ENCODE measurements at regions of chr6 and their contacts with region 1.

Region 1: GRCh38 chr6:32971581-32972352 is 3.4 kb downstream of the BRD2 start:
- DNase-seq: peak; percentile 99 to 100 (median 100)
- ATAC-seq: peak; percentile 57
- H3K4me3 ChIP-seq: peak overlapping the region; percentile 78 to 98
- H3K4me3 Mint-ChIP-seq: peak overlapping the region; percentile 93
- H3K27ac ChIP-seq: peak overlapping the region; percentile 86 to 97
- H3K27ac Mint-ChIP-seq: peak overlapping the region; percentile 99
- H3K4me1 ChIP-seq: peaks cover 33% of the 10 kb centered on the region
- H3K4me1 Mint-ChIP-seq: peaks cover 47% of the 10 kb centered on the region
- H3K27me3 ChIP-seq: no peaks in the 10 kb centered on the region
- H3K27me3 Mint-ChIP-seq: no peaks in the 10 kb centered on the region
- CTCF ChIP-seq: no peak

Region 2: GRCh38 chr6:32838114-32838958 is 133.4 kb before region 1 on chr6 and contains the start of gene TAP2:
- CTCF ChIA-PET with region 1: interaction called, 34 read pairs
- POLR2A ChIA-PET with region 1: interaction called, 47 read pairs
- intact Hi-C with region 1: no loop called
- DNase-seq: peak; percentile 96 to 99 (median 97)
- ATAC-seq: peak; percentile 90
- H3K4me3 ChIP-seq: peak within 1 kb of the TSS; percentile 64 to 83
- H3K4me3 Mint-ChIP-seq: peak within 1 kb of the TSS; percentile 93
- H3K27ac ChIP-seq: peak within 1 kb of the TSS; percentile 88 to 100
- H3K27ac Mint-ChIP-seq: peak within 1 kb of the TSS; percentile 98
- H3K4me1 ChIP-seq: peaks cover 60% of the 10 kb centered on the region
- H3K4me1 Mint-ChIP-seq: peaks cover 89% of the 10 kb centered on the region
- H3K27me3 ChIP-seq: no peaks in the 10 kb centered on the region
- H3K27me3 Mint-ChIP-seq: no peaks in the 10 kb centered on the region
- CTCF ChIP-seq: peak; percentile 99
- total RNA-seq, gene TAP2: 88.9 to 91.0 TPM

Region 3: DNA sequence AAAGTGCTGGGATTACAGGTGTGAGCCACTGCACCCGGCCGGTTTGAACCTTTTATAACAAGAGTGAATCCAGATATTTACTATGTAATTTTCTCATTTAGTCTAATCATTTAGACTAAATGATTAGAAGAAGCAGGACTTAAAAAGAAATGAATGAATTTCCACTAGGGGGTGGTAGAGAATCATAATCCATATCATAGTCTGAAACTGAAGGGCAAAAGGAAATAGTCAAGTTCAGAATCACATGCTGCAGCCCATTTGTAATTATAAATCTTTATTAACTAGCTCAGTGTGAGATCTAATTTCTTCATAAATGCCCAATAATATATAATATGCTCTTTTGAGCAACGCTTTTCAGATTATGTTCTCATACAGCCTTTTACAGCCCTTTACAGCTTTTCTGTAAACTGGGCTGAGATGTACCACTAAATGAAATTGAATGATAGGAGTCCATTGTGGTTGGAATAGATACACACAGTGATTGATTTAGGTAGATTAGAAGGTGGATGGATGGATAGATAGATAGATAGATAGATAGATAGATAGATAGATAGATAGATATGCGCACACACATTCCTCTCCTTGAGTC is 86.0 kb before region 1 on chr6:
- CTCF ChIA-PET with region 1: interaction called, 18 read pairs
- POLR2A ChIA-PET with region 1: interaction called, 11 read pairs
- intact Hi-C with region 1: loop called in 1 of 2 experiments (anchors 5 kb)
- DNase-seq: peak in 2 of 9 experiments; percentile 78 to 85
- ATAC-seq: peak; percentile 71
- H3K4me3 ChIP-seq: no peak overlapping the region
- H3K4me3 Mint-ChIP-seq: no peak overlapping the region
- H3K27ac ChIP-seq: no peak overlapping the region
- H3K27ac Mint-ChIP-seq: no peak overlapping the region
- H3K4me1 ChIP-seq: no peaks in the 10 kb centered on the region
- H3K4me1 Mint-ChIP-seq: no peaks in the 10 kb centered on the region
- H3K27me3 ChIP-seq: no peaks in the 10 kb centered on the region
- H3K27me3 Mint-ChIP-seq: no peaks in the 10 kb centered on the region
- CTCF ChIP-seq: peak; percentile 77

Region 4: DNA sequence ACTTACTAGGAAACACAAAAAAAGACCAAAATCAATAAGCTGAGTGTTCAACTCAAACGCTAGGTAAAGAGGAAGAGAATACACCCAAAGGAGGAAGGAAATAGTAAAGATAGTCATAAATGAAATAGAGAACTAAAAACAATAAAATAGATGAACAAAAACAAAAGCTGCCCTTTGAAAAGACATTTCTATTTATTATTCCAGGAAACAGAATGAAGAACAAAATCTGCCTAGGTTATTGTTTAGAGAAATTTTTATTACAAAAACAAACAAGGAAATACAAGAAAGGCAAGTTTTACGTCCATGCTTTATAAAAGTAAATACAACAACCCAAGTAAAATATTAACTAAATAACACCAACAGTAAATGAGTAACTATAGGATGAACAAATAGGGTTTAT is 51.1 kb before region 1 on chr6:
- CTCF ChIA-PET with region 1: no interaction called
- POLR2A ChIA-PET with region 1: no interaction called
- intact Hi-C with region 1: no loop called
- DNase-seq: no peak
- ATAC-seq: no peak
- H3K4me3 ChIP-seq: no peak overlapping the region
- H3K4me3 Mint-ChIP-seq: no peak overlapping the region
- H3K27ac ChIP-seq: no peak overlapping the region
- H3K27ac Mint-ChIP-seq: no peak overlapping the region
- H3K4me1 ChIP-seq: no peaks in the 10 kb centered on the region
- H3K4me1 Mint-ChIP-seq: no peaks in the 10 kb centered on the region
- H3K27me3 ChIP-seq: peaks cover 0 to 3% of the 10 kb centered on the region in 2 experiments
- H3K27me3 Mint-ChIP-seq: peaks cover 6% of the 10 kb centered on the region
- CTCF ChIP-seq: no peak

Region 5: DNA sequence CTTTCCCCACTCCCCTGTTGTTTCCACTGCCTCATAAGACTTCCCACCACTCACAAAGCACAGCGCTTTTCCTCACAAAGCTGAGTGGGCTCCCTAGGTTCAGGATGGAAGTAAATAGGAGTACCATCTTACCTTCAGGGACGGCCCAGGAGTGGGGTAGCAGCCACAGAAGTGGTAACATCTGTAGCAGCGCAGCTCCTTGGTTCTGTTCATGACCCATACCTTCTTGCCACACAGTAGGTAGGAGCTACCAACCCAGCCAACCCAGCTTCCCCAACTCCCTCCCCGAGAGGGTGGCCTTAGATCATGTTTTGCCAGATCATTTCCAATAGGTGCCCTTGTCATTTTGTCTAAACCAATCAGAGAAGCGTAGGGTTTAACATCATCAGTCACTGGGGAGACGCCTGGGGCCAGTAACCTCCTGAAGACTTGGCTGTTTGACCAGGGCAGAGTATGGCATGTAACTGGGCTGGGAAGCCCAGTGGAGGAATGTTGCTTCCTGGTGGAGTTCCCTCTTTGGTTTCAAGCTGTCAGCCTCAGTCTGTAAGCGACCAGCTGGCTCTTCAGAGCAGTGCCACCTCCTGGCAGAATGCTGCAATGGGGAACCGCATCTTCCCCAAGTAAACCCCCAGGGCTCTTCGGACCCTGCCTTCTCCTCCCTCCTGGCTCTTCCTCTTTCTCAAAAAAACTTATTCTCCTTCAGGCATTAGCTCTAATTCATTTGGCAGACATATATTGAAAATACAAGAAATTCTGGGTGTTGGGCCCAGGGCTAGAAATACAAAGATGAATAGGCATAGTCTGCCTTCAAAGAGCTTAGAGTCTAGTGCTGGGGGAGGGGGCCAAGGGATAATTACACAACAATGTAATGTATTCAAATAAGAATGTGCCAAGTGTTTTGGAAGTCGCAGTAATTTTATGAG is 18.7 kb before region 1 on chr6 and contains the start of gene HLA-DMA:
- CTCF ChIA-PET with region 1: interaction called, 662 read pairs
- POLR2A ChIA-PET with region 1: interaction called, 296 read pairs
- intact Hi-C with region 1: loop called (anchors 1 kb)
- DNase-seq: peak; percentile 55 to 92 (median 77)
- ATAC-seq: peak; percentile 98
- H3K4me3 ChIP-seq: peak within 1 kb of the TSS; percentile 49 to 52
- H3K4me3 Mint-ChIP-seq: peak within 1 kb of the TSS; percentile 85
- H3K27ac ChIP-seq: peak within 1 kb of the TSS; percentile 28 to 66
- H3K27ac Mint-ChIP-seq: peak within 1 kb of the TSS; percentile 93
- H3K4me1 ChIP-seq: peaks cover 29% of the 10 kb centered on the region
- H3K4me1 Mint-ChIP-seq: peaks cover 55% of the 10 kb centered on the region
- H3K27me3 ChIP-seq: no peaks in the 10 kb centered on the region
- H3K27me3 Mint-ChIP-seq: no peaks in the 10 kb centered on the region
- CTCF ChIP-seq: peak; percentile 86
- total RNA-seq, gene HLA-DMA: 25.9 to 32.3 TPM

Region 6: GRCh38 chr6:33271458-33272274 is 299.9 kb after region 1 on chr6 and contains the starts of genes RPS18 and VPS52:
- CTCF ChIA-PET with region 1: no interaction called
- POLR2A ChIA-PET with region 1: interaction called, 16 read pairs
- intact Hi-C with region 1: no loop called
- DNase-seq: peak; percentile 82 to 99 (median 90)
- ATAC-seq: peak; percentile 85
- H3K4me3 ChIP-seq: peak within 1 kb of the TSS; percentile 74 to 82
- H3K4me3 Mint-ChIP-seq: peak within 1 kb of the TSS; percentile 100
- H3K27ac ChIP-seq: peak within 1 kb of the TSS; percentile 87 to 95
- H3K27ac Mint-ChIP-seq: peak within 1 kb of the TSS; percentile 100
- H3K4me1 ChIP-seq: peaks cover 44% of the 10 kb centered on the region
- H3K4me1 Mint-ChIP-seq: peaks cover 62% of the 10 kb centered on the region
- H3K27me3 ChIP-seq: no peaks in the 10 kb centered on the region
- H3K27me3 Mint-ChIP-seq: no peaks in the 10 kb centered on the region
- CTCF ChIP-seq: no peak
- total RNA-seq, gene RPS18: 4,154 to 4,290 TPM
- total RNA-seq, gene VPS52: 72.2 to 75.9 TPM

Region 7: DNA sequence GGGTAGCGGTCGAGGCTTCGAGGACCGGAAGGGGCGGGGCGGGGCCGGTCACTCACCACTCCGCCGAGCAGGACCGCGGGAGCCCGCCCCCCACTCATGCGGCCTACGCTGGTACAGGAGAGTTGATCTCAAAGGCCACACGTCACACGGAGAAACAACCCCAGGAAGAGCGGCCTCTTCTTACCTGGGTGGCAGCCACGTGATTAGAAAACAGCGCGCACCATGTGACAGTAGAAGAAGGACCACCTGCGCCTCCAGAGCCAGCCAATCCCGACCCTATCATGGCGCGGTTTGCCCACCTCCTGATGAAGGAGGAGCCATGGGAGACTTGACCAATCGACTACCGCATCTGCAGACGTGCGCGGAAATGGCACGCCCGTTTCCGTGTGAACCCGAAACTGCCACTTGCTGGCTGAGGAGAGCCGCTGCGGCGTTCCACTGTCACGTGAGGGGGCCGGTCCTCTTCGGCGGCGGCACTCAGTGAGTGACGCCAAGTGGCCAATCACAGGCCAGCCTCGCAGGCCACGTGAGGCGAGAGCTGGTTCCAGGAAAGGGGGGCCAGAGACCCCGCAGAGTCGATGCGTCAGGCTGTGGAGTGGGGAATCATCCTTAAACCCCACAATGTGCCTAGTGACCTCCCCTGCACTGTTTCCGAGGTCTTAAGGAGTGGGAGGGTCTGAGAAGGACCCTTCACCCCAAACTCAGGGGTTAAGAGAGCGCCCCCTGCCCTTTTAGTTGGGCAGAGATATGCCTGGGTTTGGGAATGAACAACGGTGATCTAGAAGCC is 446.3 kb after region 1 on chr6 and contains the start of gene CUTA:
- CTCF ChIA-PET with region 1: no interaction called
- POLR2A ChIA-PET with region 1: interaction called, 5 read pairs
- intact Hi-C with region 1: loop called in 1 of 2 experiments (anchors 5 kb)
- DNase-seq: peak; percentile 96 to 100 (median 99)
- ATAC-seq: peak; percentile 87
- H3K4me3 ChIP-seq: peak within 1 kb of the TSS; percentile 68 to 70
- H3K4me3 Mint-ChIP-seq: peak within 1 kb of the TSS; percentile 94
- H3K27ac ChIP-seq: peak within 1 kb of the TSS; percentile 83 to 88
- H3K27ac Mint-ChIP-seq: peak within 1 kb of the TSS; percentile 97
- H3K4me1 ChIP-seq: peaks cover 68% of the 10 kb centered on the region
- H3K4me1 Mint-ChIP-seq: peaks cover 83% of the 10 kb centered on the region
- H3K27me3 ChIP-seq: no peaks in the 10 kb centered on the region
- H3K27me3 Mint-ChIP-seq: no peaks in the 10 kb centered on the region
- CTCF ChIP-seq: peak; percentile 27
- total RNA-seq, gene CUTA: 159 to 177 TPM

Measured in CD8-positive, alpha-beta T cell (primary cell).